Common myeloid progenitor, CD34-positive (primary cell): ENCODE measurements at regions of chr3 and their contacts with region 1.

Region 1: GRCh38 chr3:108153451-108153981 is 62.7 kb upstream of the CD47 start:
- DNase-seq: peak; percentile 68 to 79 (median 71)
- H3K4me3 ChIP-seq: no peak overlapping the region
- H3K27ac ChIP-seq: no peak overlapping the region
- H3K4me1 ChIP-seq: no peaks in the 10 kb centered on the region
- H3K27me3 ChIP-seq: no peaks in the 10 kb centered on the region

Region 2: DNA sequence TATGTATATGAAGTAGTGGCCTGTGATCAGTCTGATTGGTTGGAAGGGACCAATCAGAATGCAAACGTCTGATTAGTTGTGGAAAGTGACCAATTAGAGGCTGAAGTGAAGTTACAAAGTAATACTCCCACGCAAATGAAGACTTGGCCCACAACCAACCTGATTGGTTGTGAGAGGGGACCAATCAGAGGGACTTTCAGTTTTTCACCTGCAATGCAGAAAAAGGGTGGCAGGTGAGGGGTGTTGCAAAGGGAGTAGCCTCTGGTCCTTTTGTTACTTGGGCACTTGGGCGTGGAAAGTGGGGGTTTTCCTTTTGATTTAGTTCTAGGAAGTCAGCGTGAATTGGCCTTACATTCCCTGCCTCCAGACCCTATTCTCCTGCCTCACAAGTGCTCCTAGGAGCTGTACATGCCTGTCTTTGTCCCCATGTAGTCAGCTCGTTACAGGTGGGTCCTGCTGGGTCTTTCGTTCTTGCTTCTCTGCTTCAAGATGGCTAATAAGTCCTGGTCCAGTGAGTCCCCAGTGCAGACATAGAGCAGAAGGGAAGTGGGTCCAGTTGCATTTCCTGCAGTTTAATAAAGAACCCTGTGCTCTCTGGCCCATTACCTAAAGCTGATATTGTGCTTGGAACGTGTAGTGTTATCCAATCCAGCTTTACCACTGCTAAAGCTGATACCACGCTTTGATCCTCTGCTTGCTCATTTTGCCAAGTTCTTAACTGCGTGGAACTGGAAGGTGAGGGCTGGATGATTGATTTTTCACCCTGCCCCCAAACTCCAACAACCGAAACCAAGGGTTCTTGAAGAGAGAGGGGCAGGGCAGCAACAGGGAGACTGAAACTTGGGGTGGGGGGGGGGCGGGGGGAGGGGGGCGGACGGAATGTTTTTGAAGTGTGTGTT is 16.7 kb before region 1 on chr3:
- CTCF ChIA-PET with region 1: interaction called, 11 read pairs
- POLR2A ChIA-PET with region 1: no interaction called
- DNase-seq: no peak
- H3K4me3 ChIP-seq: no peak overlapping the region
- H3K27ac ChIP-seq: no peak overlapping the region
- H3K4me1 ChIP-seq: peaks cover 12 to 29% (median 20%) of the 10 kb centered on the region in 4 experiments
- H3K27me3 ChIP-seq: no peaks in the 10 kb centered on the region

Region 3: GRCh38 chr3:108180194-108180593 is 26.7 kb after region 1 on chr3:
- CTCF ChIA-PET with region 1: no interaction called
- POLR2A ChIA-PET with region 1: no interaction called
- DNase-seq: no peak
- H3K4me3 ChIP-seq: no peak overlapping the region
- H3K27ac ChIP-seq: no peak overlapping the region
- H3K4me1 ChIP-seq: peaks cover 0 to 20% (median 14%) of the 10 kb centered on the region in 4 experiments
- H3K27me3 ChIP-seq: no peaks in the 10 kb centered on the region